ENCODE measurements at regions of chrX and their contacts with region 1.

Region 1: GRCh38 chrX:119516157-119516702 is 48.0 kb downstream of the SLC25A5 start:
- DNase-seq: peak; percentile 6 to 73 (median 55)
- ATAC-seq: peak; percentile 99
- H3K4me3 ChIP-seq: no peak overlapping the region
- H3K4me3 Mint-ChIP-seq: no peak overlapping the region
- H3K27ac ChIP-seq: no peak overlapping the region
- H3K27ac Mint-ChIP-seq: peak overlapping the region in 5 of 9 donors; percentile 4 to 57 (median 40)
- H3K4me1 ChIP-seq: no peaks in the 10 kb centered on the region
- H3K4me1 Mint-ChIP-seq: peaks cover 2 to 7% (median 4%) of the 10 kb centered on the region in 7 donors
- H3K27me3 ChIP-seq: no peaks in the 10 kb centered on the region
- H3K27me3 Mint-ChIP-seq: no peaks in the 10 kb centered on the region

Region 2: DNA sequence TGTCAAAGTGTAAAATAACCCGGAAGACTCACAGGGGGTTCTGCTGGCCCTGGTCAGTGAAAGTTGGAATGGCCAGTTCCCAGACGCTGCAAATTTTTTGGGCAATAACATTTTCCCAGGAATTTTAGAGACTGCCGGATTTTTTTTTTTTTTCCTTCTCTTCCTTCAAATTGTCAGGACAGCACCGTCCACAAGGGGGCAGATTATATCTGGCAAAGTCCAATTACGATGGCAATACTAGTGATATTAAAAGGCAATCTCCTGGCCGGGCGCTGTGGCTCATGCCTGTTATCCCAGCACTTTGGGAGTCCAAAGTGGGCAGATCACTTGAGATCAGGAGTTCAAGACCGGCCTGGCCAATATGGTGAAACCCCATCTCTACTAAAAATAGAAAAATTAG is 27.5 kb before region 1 on chrX:
- CTCF ChIA-PET with region 1: interaction called, 7 read pairs
- POLR2A ChIA-PET with region 1: no interaction called
- intact Hi-C with region 1: loop called in 1 of 2 experiments (anchors 1 kb)
- DNase-seq: peak in 5 of 9 donors; percentile 14 to 41 (median 36)
- ATAC-seq: peak; percentile 54
- H3K4me3 ChIP-seq: no peak overlapping the region
- H3K4me3 Mint-ChIP-seq: no peak overlapping the region
- H3K27ac ChIP-seq: no peak overlapping the region
- H3K27ac Mint-ChIP-seq: no peak overlapping the region
- H3K4me1 ChIP-seq: no peaks in the 10 kb centered on the region
- H3K4me1 Mint-ChIP-seq: peaks cover 0 to 7% (median 0%) of the 10 kb centered on the region in 7 donors
- H3K27me3 ChIP-seq: no peaks in the 10 kb centered on the region
- H3K27me3 Mint-ChIP-seq: no peaks in the 10 kb centered on the region

Region 3: GRCh38 chrX:119574394-119575266 is 58.4 kb after region 1 on chrX and contains the start of gene UBE2A:
- CTCF ChIA-PET with region 1: no interaction called
- POLR2A ChIA-PET with region 1: no interaction called
- intact Hi-C with region 1: loop called (anchors 1 to 5 kb)
- DNase-seq: peak; percentile 72 to 89 (median 85)
- ATAC-seq: peak; percentile 99
- H3K4me3 ChIP-seq: peak within 1 kb of the TSS; percentile 72
- H3K4me3 Mint-ChIP-seq: peak within 1 kb of the TSS; percentile 85 to 96 (median 92)
- H3K27ac ChIP-seq: peak within 1 kb of the TSS; percentile 88
- H3K27ac Mint-ChIP-seq: peak within 1 kb of the TSS; percentile 85 to 97 (median 90)
- H3K4me1 ChIP-seq: peaks cover 0 to 11% of the 10 kb centered on the region in 2 donors
- H3K4me1 Mint-ChIP-seq: peaks cover 7 to 35% (median 18%) of the 10 kb centered on the region in 7 donors
- H3K27me3 ChIP-seq: no peaks in the 10 kb centered on the region
- H3K27me3 Mint-ChIP-seq: no peaks in the 10 kb centered on the region
- total RNA-seq, gene UBE2A: 34.0 to 74.7 (median 60.2) TPM

Region 4: DNA sequence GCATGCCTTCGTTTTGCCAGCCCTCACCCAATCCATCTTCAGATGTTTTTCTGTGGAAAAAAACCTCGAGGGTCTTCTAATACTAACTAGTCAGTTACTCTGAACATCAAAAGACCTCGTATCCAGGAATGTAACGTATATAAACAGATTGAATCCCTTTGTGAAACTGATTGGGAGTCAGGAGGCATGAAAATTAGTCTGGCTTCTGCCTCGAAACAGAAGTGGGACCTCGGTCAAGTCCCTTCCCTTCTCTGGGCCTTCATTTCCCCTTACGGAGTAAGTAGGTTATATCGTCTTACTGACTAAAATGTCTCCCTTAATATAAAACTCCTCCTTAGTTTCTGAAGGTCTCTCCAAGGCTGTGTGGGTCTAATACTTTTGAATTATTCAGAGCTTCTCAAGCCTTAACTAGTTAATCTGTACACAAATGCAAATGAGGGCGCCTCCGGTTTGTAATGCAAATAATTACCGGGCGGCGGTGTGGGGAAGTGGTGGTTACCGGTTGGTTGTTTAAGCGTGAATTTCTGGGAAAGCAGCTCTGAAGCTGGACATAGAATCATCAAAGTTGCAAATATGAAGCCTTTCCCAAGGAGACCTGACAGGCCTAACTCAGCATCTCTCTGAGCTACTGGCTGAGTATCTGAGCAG is 101.4 kb after region 1 on chrX:
- CTCF ChIA-PET with region 1: no interaction called
- POLR2A ChIA-PET with region 1: no interaction called
- intact Hi-C with region 1: loop called in 1 of 2 experiments (anchors 5 kb)
- DNase-seq: no peak
- ATAC-seq: peak; percentile 27
- H3K4me3 ChIP-seq: no peak overlapping the region
- H3K4me3 Mint-ChIP-seq: no peak overlapping the region
- H3K27ac ChIP-seq: no peak overlapping the region
- H3K27ac Mint-ChIP-seq: peak overlapping the region in 4 of 9 donors; percentile 21 to 67 (median 50)
- H3K4me1 ChIP-seq: no peaks in the 10 kb centered on the region
- H3K4me1 Mint-ChIP-seq: peaks cover 0 to 14% (median 5%) of the 10 kb centered on the region in 7 donors
- H3K27me3 ChIP-seq: no peaks in the 10 kb centered on the region
- H3K27me3 Mint-ChIP-seq: no peaks in the 10 kb centered on the region

Region 5: DNA sequence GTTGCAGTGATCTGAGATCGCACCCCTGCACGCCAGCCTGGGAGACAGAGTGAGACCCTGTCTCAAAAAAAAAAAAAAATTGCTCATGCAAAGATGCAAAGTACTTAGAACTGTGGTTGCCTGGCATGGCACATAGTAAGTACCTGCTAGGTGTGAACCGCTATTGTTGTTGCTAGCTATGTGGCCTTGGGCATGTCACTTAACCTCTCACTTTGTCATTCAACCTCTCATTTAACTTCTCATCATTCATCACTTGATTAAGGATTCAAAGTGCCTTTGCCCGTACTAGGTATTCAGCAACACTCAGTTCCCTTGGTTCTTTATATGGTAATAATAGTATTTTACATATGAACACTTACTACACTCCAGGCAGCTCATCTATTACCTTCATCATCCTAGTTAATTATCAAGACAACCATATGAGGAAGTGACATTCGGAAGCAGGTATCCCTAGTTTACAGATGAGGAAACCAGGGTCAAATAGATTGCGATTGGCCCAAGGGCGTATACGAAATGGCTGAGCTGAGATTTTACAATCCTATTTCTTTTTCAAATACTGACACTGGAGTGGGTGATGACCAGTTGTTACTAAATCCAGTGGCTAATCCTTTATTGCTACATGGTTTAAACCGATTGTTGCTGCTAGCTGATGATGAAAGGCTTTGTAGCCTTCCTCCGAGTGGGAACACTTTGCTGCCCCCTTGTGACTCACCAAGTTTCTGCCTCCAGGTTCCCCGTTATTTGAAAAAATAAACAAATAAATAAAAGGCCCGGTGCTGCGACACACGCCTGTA is 213.4 kb after region 1 on chrX:
- CTCF ChIA-PET with region 1: interaction called, 8 read pairs
- POLR2A ChIA-PET with region 1: no interaction called
- intact Hi-C with region 1: loop called (anchors 1 kb)
- DNase-seq: peak; percentile 23 to 77 (median 58)
- ATAC-seq: peak; percentile 85
- H3K4me3 ChIP-seq: no peak overlapping the region
- H3K4me3 Mint-ChIP-seq: no peak overlapping the region
- H3K27ac ChIP-seq: no peak overlapping the region
- H3K27ac Mint-ChIP-seq: peak overlapping the region in 3 of 9 donors; percentile 14 to 41 (median 25)
- H3K4me1 ChIP-seq: no peaks in the 10 kb centered on the region
- H3K4me1 Mint-ChIP-seq: peaks cover 0 to 13% (median 10%) of the 10 kb centered on the region in 7 donors
- H3K27me3 ChIP-seq: no peaks in the 10 kb centered on the region
- H3K27me3 Mint-ChIP-seq: no peaks in the 10 kb centered on the region

Region 6: GRCh38 chrX:119775517-119776238 is 259.4 kb after region 1 on chrX:
- CTCF ChIA-PET with region 1: no interaction called
- POLR2A ChIA-PET with region 1: no interaction called
- intact Hi-C with region 1: loop called (anchors 1 to 2 kb)
- DNase-seq: no peak
- ATAC-seq: peak; percentile 59
- H3K4me3 ChIP-seq: no peak overlapping the region
- H3K4me3 Mint-ChIP-seq: peak overlapping the region in 2 of 10 donors; percentile 31 to 54
- H3K27ac ChIP-seq: no peak overlapping the region
- H3K27ac Mint-ChIP-seq: peak overlapping the region in 2 of 9 donors; percentile 36 to 73
- H3K4me1 ChIP-seq: no peaks in the 10 kb centered on the region
- H3K4me1 Mint-ChIP-seq: peaks cover 0 to 6% (median 0%) of the 10 kb centered on the region in 7 donors
- H3K27me3 ChIP-seq: no peaks in the 10 kb centered on the region
- H3K27me3 Mint-ChIP-seq: no peaks in the 10 kb centered on the region

Region 7: DNA sequence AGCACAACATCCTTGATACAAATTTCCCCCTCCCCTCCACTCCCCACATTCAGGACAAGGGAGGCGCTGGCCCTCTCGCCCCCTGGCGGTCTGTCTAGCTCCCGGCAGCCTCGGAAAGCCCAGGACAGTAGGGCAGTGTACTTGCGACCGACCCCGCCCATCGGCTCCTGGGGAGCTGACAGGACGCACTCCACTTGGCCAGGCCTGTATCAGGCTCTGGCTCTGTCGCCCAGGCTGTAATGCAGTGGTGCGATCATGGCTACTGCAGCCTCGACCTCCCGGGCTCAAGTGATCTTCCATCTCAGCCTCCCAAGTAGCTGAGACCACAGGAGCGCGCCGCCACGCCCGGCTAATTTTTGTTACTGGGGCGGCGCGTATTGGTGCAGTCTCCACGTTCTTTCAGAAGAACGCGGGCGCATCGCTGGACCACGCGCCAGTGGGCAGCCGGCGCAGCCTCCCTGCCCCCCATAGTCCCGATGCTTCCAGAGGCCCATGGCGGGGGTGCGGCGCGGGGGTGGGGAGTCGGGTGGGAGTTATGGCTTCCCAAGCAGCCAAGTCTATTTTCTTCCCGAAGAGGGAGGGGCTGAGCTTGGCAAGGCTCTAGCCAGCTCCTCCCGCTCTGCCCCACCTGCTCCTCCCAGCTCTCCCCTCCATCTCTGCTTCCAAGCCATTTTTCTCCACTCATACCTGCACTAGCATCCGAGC is 371.6 kb after region 1 on chrX:
- CTCF ChIA-PET with region 1: interaction called, 7 read pairs
- POLR2A ChIA-PET with region 1: no interaction called
- intact Hi-C with region 1: loop called in 1 of 2 experiments (anchors 5 kb)
- DNase-seq: peak; percentile 30 to 61 (median 38)
- ATAC-seq: peak; percentile 87
- H3K4me3 ChIP-seq: no peak overlapping the region
- H3K4me3 Mint-ChIP-seq: peak overlapping the region in 9 of 10 donors; percentile 38 to 67 (median 51)
- H3K27ac ChIP-seq: no peak overlapping the region
- H3K27ac Mint-ChIP-seq: no peak overlapping the region
- H3K4me1 ChIP-seq: no peaks in the 10 kb centered on the region
- H3K4me1 Mint-ChIP-seq: peaks cover 0 to 11% (median 7%) of the 10 kb centered on the region in 7 donors
- H3K27me3 ChIP-seq: no peaks in the 10 kb centered on the region
- H3K27me3 Mint-ChIP-seq: no peaks in the 10 kb centered on the region